Natural killer cell (primary cell): ENCODE measurements at regions of chr17 and their contacts with region 1.

Region 1: DNA sequence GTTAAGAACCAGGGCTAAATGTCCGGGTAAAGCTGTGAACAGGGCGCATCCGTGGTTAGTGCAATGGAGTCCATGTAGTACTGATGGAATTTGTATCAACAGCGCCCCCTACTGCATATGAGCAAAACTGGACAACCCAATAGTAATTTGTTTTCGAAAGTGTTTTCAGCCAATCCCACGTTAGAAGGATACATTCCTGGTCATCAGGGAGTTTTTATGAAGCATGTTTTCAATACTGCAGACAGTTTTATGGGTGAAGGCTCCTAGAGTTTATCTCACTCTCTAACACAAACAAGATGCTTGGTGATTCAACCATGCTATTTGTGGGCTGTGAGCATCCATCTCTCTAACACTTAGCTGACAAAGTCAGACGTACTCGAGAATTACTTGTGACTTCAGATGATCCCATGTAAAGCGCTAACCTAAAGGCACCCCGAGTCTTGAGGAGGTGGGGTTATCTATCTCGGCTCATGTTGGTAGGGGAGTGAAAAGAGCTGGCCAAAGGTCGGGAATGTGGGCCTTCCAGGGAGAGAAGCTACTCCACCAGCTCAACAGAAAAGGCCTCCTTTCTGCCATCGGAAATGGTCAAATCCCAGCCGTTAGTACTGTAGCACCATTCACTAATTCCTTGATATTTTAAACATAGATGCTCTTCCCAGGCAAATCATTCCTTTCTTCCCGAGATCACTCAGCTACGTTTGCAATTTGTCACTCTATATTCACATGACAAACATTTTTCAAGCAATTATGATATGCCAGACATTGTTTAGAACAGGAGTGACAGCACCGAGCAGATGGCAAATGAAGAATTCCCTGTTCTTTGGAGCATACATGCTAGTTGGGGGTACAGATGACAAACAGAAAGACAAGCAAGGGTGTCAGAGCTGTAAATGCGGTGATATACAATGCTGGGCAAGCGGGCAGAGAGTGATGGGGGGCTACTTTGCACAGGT is 46.9 kb upstream of the HNF1B start:
- DNase-seq: peak in 1 of 2 donors; percentile 70
- ATAC-seq: peak in 2 of 3 donors; percentile 44 to 66
- H3K4me3 ChIP-seq: no peak overlapping the region
- H3K4me3 Mint-ChIP-seq: no peak overlapping the region
- H3K27ac ChIP-seq: no peak overlapping the region
- H3K27ac Mint-ChIP-seq: no peak overlapping the region
- H3K4me1 ChIP-seq: no peaks in the 10 kb centered on the region
- H3K4me1 Mint-ChIP-seq: no peaks in the 10 kb centered on the region
- H3K27me3 ChIP-seq: peaks cover 11% of the 10 kb centered on the region
- H3K27me3 Mint-ChIP-seq: peaks cover 19 to 32% of the 10 kb centered on the region in 2 donors
- CTCF ChIP-seq: peak; percentile 50

Region 2: DNA sequence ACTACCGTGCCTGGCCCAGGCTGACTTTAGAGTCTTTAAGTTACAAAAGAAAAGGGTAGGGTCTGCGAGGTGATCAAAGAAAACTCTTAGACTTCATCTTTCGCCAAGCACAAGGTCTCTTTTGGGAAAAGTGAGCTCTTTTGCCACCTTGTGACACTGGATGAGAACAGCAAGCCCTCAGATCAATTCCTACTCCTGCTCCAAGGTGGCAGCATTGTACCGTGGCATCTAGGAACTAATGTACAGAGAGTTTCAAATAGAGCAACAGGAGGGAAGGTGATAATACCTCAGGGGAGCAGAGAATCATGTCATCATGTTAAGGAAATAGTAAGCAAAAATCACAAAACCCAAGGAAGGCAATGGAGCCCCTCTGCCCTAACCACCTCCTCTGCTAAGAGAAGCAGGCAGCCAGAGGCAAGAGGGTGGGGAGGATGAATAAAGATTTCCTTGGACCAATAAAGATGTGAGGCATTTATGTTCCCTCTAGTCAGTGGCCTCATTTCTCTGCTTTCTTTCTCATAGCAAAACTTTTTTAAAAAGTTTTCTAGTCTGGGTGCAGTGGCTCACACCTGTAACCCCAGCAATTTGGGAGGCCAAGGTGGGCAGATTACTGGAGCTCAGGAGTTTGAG is 418.1 kb before region 1 on chr17:
- intact Hi-C with region 1: loop called (anchors 5 kb)
- DNase-seq: peak; percentile 29 to 84
- ATAC-seq: peak; percentile 76 to 99 (median 98)
- H3K4me3 ChIP-seq: no peak overlapping the region
- H3K4me3 Mint-ChIP-seq: no peak overlapping the region
- H3K27ac ChIP-seq: no peak overlapping the region
- H3K27ac Mint-ChIP-seq: no peak overlapping the region
- H3K4me1 ChIP-seq: no peaks in the 10 kb centered on the region
- H3K4me1 Mint-ChIP-seq: peaks cover 0 to 7% of the 10 kb centered on the region in 2 donors
- H3K27me3 ChIP-seq: no peaks in the 10 kb centered on the region
- H3K27me3 Mint-ChIP-seq: no peaks in the 10 kb centered on the region
- CTCF ChIP-seq: peak; percentile 76

Region 3: DNA sequence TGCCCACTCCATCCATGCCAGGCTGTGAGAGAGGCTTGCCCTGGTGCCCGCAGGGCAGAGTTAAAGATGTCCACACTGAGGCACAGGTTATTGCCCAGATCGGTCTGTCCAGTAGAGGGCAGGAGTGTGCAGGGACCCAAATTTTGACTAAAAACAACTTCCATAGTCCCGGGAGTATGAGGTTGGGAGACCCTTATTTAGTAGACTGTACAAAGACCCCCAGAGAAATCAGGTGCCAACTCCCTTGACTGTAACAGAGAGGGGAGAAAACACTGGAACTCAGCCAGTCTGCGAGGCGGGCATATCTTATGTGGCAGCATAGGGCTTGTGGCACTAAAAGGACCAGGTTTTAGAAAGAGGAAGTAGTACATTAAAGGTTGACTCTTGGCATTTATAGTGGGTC is 90.2 kb before region 1 on chr17:
- intact Hi-C with region 1: loop called (anchors 1 kb)
- DNase-seq: peak in 1 of 2 donors; percentile 55
- ATAC-seq: peak; percentile 40 to 72 (median 68)
- H3K4me3 ChIP-seq: no peak overlapping the region
- H3K4me3 Mint-ChIP-seq: no peak overlapping the region
- H3K27ac ChIP-seq: no peak overlapping the region
- H3K27ac Mint-ChIP-seq: no peak overlapping the region
- H3K4me1 ChIP-seq: no peaks in the 10 kb centered on the region
- H3K4me1 Mint-ChIP-seq: peaks cover 5 to 7% of the 10 kb centered on the region in 2 donors
- H3K27me3 ChIP-seq: peaks cover 5% of the 10 kb centered on the region
- H3K27me3 Mint-ChIP-seq: peaks cover 25 to 43% of the 10 kb centered on the region in 2 donors
- CTCF ChIP-seq: peak; percentile 60

Region 4: DNA sequence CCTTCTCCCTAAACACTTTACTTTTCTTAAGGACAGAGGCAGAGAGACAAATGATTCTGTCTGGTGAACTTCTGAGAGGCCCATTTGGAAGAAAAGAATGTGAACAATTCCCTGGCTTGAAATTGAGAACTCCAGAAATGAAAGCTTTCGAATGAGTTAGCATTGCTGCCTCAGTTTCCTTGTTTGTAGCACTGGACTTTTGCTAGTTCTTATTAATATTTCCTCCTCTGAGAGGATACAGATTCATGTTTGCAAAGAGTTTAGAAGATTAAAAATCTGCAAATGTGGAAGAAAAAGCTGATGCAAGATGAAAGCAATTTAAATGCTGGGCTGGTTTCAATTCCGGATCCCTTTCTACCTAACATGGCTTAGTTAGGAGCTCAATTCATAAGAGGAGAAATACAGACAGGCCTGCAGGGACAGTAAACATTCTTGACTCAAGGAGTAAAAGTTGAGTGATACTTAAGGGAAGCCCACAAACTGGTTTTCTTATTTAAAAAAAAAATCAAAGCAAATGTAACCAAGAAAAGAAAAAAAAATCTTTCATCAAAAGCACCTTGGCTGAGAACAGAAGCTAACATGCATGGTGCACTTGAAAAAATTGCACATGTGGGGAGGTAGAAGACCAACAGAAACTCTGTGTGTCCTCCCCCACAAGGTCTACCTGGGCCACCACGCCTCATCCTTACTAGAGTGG is 73.9 kb before region 1 on chr17:
- intact Hi-C with region 1: no loop called
- DNase-seq: no peak
- ATAC-seq: no peak
- H3K4me3 ChIP-seq: no peak overlapping the region
- H3K4me3 Mint-ChIP-seq: no peak overlapping the region
- H3K27ac ChIP-seq: no peak overlapping the region
- H3K27ac Mint-ChIP-seq: no peak overlapping the region
- H3K4me1 ChIP-seq: no peaks in the 10 kb centered on the region
- H3K4me1 Mint-ChIP-seq: no peaks in the 10 kb centered on the region
- H3K27me3 ChIP-seq: no peaks in the 10 kb centered on the region
- H3K27me3 Mint-ChIP-seq: peaks cover 17 to 34% of the 10 kb centered on the region in 2 donors
- CTCF ChIP-seq: no peak

Region 5: DNA sequence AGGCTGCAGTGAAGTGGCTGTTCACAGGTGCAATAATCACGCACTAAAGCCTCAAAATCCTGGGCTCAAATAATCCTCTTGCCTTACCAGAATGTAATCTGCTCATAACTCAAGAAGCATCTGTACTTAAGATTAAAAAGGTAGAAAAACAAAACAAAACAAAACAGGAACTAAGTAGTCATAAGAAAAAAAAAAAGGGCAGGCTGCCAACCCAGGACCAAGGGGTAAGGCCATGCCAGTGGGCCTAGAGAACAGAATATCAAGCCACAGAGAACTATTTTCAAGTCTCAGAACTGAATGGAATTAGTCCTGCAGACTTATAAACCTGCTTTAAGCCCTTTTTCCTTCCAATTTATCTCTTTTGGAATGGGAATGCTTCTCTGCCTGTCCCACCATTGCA is 67.7 kb after region 1 on chr17:
- intact Hi-C with region 1: no loop called
- DNase-seq: no peak
- ATAC-seq: no peak
- H3K4me3 ChIP-seq: no peak overlapping the region
- H3K4me3 Mint-ChIP-seq: no peak overlapping the region
- H3K27ac ChIP-seq: no peak overlapping the region
- H3K27ac Mint-ChIP-seq: no peak overlapping the region
- H3K4me1 ChIP-seq: peaks cover 4% of the 10 kb centered on the region
- H3K4me1 Mint-ChIP-seq: no peaks in the 10 kb centered on the region
- H3K27me3 ChIP-seq: no peaks in the 10 kb centered on the region
- H3K27me3 Mint-ChIP-seq: peaks cover 0 to 3% of the 10 kb centered on the region in 2 donors
- CTCF ChIP-seq: no peak

Region 6: DNA sequence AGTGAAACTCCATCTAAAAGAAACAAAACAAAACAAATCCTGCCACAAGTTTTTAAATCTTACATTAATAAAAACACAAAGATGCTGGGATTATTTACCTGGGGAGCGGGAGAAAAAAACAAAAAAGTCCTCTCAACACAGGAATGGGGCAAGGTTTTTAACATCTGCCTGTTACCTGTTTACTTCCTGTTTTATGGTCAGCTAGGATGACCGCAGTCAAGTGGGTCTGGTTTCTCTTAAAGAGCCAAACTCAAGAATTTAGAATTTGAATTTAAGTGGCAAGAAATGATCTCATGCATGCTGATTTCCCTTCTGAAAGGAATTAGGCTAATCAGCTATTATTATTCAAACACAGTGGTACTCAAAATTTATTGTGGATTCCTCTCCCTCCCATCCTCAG is 92.8 kb after region 1 on chr17:
- intact Hi-C with region 1: no loop called
- DNase-seq: no peak
- ATAC-seq: peak in 1 of 3 donors; percentile 37
- H3K4me3 ChIP-seq: no peak overlapping the region
- H3K4me3 Mint-ChIP-seq: peak overlapping the region; percentile 70
- H3K27ac ChIP-seq: no peak overlapping the region
- H3K27ac Mint-ChIP-seq: no peak overlapping the region
- H3K4me1 ChIP-seq: peaks cover 9% of the 10 kb centered on the region
- H3K4me1 Mint-ChIP-seq: peaks cover 8 to 9% of the 10 kb centered on the region in 2 donors
- H3K27me3 ChIP-seq: no peaks in the 10 kb centered on the region
- H3K27me3 Mint-ChIP-seq: peaks cover 0 to under 1% of the 10 kb centered on the region in 2 donors
- CTCF ChIP-seq: no peak